H1 (cell line): ENCODE measurements at regions of chr2 and their contacts with region 1.

Region 1: GRCh38 chr2:97740590-97741182 is 27.3 kb downstream of the ZAP70 start:
- DNase-seq: peak in 1 of 2 experiments; percentile 87
- H3K4me3 ChIP-seq: no peak overlapping the region
- H3K27ac ChIP-seq: no peak overlapping the region
- H3K4me1 ChIP-seq: peaks cover 0 to 2% (median 0%) of the 10 kb centered on the region in 4 experiments; a peak in 1 of 7 replicates
- H3K27me3 ChIP-seq: no peaks in the 10 kb centered on the region
- CTCF ChIP-seq: peak in 2 of 3 experiments; percentile 79 to 92; a peak in 3 of 4 replicates
- EP300 ChIP-seq: no peak
- POLR2A ChIP-seq: no peak
- RAD21 ChIP-seq: peak; percentile 67 to 68

Region 2: DNA sequence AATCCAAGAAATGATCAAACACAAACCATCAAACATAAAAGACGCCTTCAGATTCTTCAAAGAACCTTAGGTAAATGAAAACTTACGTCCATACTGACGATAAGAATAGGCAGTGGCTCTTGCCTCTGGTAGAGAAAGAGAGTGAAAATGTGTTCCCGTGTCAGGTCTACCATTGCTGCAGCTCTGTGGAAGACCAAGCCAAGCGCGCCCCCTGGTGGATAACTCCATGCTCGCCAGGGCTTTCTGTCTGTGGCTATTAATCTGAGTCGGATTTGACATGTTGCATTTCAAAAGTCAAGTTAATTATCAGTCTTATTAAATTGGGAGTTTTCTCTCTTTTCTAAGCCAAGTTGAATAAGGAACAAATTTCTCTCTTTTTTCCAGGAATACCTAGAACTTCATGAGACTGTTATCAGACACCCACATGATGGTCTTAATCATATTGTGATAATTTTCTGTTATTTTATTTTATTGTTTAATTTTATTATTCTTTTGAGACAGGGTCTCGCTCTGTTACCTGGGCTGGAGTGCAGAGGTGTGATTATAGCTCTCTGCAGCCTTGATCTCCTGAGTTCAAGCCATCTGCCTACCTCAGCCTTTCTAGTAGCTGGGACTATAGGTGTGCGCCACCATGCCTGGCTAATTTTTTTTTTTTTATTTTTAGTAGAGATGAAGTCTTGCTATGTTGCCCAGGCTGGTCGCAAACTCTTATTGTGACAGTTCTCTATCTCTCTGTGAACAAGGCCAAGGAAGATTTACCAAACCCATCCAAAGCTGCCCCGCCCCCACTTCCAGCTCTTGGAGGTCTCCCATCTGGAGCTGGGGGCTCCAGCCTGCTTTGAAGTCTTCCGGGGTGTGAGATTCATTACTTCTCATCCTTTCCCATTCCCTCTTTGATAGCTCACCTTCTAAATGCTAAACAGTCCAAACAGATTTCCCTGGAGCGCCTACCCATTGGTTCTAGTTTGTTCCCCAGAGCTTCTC is 43.1 kb before region 1 on chr2:
- CTCF ChIA-PET with region 1: interaction called, 149 read pairs
- POLR2A ChIA-PET with region 1: no interaction called
- DNase-seq: peak; percentile 67 to 95
- H3K4me3 ChIP-seq: no peak overlapping the region
- H3K27ac ChIP-seq: no peak overlapping the region
- H3K4me1 ChIP-seq: peaks cover 0 to 2% (median 0%) of the 10 kb centered on the region in 4 experiments; a peak in 2 of 7 replicates
- H3K27me3 ChIP-seq: no peaks in the 10 kb centered on the region; a peak in 1 of 7 replicates
- CTCF ChIP-seq: peak; percentile 80 to 98 (median 88)
- EP300 ChIP-seq: no peak
- POLR2A ChIP-seq: no peak
- RAD21 ChIP-seq: peak; percentile 97 to 100

Region 3: DNA sequence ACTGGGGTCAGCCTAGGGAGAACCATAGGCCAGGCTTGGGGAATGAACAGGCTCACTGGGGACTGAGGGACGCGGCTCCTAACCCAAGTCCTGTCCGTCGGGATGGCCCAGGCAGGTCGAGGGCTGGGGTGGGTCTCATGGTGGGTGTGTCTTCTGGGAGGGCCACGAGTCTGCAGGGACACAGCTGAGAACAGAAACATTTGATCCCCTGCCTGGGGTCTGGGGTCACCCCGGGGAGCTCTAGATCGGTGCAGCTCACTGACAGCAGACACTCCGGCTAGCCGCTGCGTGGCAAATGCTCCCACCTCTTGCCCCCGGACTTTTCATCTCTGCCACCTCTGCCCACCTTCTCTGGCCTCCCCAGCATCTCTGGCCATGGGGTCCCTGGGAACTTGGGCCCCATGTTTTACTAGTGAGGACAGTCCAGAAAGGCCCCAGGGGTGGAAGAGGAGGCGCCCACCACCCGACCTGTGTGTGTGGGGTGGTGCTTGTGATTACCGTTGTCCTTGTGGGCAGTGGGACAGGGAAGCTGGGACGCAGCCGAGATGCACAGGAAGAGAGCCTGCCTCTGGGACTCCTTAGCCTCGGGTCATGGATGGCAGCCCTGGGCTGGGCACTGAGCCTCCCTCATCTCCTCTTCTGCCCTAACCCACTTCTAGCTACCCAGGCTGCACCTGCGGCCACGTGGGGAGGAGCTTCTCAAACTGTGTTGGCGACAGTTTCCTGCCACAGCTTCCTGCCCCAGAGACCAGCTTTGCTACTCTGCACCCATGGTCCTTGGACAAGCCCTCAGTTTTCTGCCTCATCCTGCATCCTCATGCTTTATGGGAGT is 22.4 kb before region 1 on chr2:
- CTCF ChIA-PET with region 1: interaction called, 105 read pairs
- POLR2A ChIA-PET with region 1: interaction called, 3 read pairs
- DNase-seq: no peak
- H3K4me3 ChIP-seq: no peak overlapping the region
- H3K27ac ChIP-seq: no peak overlapping the region
- H3K4me1 ChIP-seq: peaks cover 2 to 13% (median 3%) of the 10 kb centered on the region in 4 experiments; a peak in 6 of 7 replicates
- H3K27me3 ChIP-seq: no peaks in the 10 kb centered on the region
- CTCF ChIP-seq: no peak
- EP300 ChIP-seq: no peak
- POLR2A ChIP-seq: no peak
- RAD21 ChIP-seq: no peak

Region 4: GRCh38 chr2:97751752-97752151 is 11.1 kb after region 1 on chr2:
- CTCF ChIA-PET with region 1: interaction called, 33 read pairs
- POLR2A ChIA-PET with region 1: no interaction called
- DNase-seq: no peak
- H3K4me3 ChIP-seq: no peak overlapping the region; a peak in 1 of 8 replicates
- H3K27ac ChIP-seq: no peak overlapping the region
- H3K4me1 ChIP-seq: peaks cover 0 to 10% (median 3%) of the 10 kb centered on the region in 4 experiments; a peak in 4 of 7 replicates
- H3K27me3 ChIP-seq: no peaks in the 10 kb centered on the region
- CTCF ChIP-seq: no peak
- EP300 ChIP-seq: no peak
- POLR2A ChIP-seq: no peak
- RAD21 ChIP-seq: no peak

Region 5: DNA sequence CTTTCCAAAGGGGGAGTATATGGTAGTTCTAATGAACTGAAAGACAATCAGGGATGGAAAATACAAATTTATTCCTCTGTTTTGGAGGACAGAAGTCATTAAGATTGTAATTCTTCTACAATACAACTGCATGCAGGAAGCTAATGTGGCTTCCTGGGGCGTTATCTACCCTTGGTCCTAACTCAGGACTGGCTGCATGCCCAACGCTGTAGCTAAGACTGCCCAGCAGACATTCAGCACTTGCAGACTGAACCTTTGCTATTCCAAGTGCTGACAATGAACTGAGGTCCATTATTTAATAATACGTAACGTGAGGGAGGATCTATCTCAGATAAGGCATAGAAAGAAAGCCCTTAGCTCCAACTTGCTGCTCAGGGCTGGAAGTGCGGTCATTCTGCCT is 25.9 kb after region 1 on chr2:
- CTCF ChIA-PET with region 1: interaction called, 17 read pairs
- POLR2A ChIA-PET with region 1: no interaction called
- DNase-seq: no peak
- H3K4me3 ChIP-seq: no peak overlapping the region
- H3K27ac ChIP-seq: no peak overlapping the region
- H3K4me1 ChIP-seq: peaks cover 0 to 13% (median 0%) of the 10 kb centered on the region in 4 experiments; a peak in 3 of 7 replicates
- H3K27me3 ChIP-seq: no peaks in the 10 kb centered on the region
- CTCF ChIP-seq: no peak
- EP300 ChIP-seq: no peak
- POLR2A ChIP-seq: no peak
- RAD21 ChIP-seq: no peak